ENCODE measurements at regions of chr1 and their contacts with region 1.

Region 1: DNA sequence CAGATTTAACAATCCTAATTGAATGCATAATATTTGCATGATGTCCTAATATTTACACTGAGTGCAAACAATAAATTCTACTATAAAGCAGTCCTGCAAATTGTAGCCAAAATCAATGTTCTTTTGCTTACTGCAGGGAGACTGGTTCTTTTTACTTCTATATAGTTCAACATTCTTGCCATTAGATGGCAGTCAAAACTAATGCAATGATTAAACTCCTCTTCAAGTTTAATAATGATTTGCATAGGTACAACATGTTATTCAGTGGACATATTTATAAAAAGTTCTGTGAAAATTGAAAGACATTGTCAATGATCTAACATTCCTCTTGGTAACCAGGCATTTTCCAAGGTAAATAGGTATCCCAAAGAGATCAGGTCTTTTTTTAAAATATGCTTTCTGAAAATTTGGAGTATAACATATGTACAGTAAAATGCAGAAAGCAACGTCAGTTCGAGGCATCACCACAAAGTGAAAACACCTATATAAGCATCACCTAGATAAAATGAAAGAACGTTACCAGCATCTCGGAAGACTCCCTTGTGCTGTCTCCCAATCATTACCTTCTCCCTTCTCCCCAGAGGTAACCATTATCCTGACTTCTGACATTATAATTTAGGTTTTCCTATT is 9.8 kb upstream of the FNBP1L start:
- DNase-seq: peak; percentile 39
- H3K4me3 ChIP-seq: no peak overlapping the region
- H3K27ac ChIP-seq: no peak overlapping the region
- H3K4me1 ChIP-seq: peaks cover 5% of the 10 kb centered on the region
- H3K27me3 ChIP-seq: no peaks in the 10 kb centered on the region
- CTCF ChIP-seq: peak; percentile 52 to 63

Region 2: GRCh38 chr1:93078986-93079654 is 359.0 kb before region 1 on chr1 and contains the start of gene MTF2:
- CTCF ChIA-PET with region 1: no interaction called
- dilution Hi-C with region 1: no loop called
- in situ Hi-C with region 1: no loop called
- intact Hi-C with region 1: loop called (anchors 5 kb)
- DNase-seq: peak; percentile 94
- H3K4me3 ChIP-seq: peak within 1 kb of the TSS; percentile 67 to 99 (median 83)
- H3K27ac ChIP-seq: peak within 1 kb of the TSS; percentile 79
- H3K4me1 ChIP-seq: peaks cover 22% of the 10 kb centered on the region
- H3K27me3 ChIP-seq: no peaks in the 10 kb centered on the region
- CTCF ChIP-seq: no peak
- total RNA-seq, gene MTF2: 23.5 to 27.5 TPM

Region 3: DNA sequence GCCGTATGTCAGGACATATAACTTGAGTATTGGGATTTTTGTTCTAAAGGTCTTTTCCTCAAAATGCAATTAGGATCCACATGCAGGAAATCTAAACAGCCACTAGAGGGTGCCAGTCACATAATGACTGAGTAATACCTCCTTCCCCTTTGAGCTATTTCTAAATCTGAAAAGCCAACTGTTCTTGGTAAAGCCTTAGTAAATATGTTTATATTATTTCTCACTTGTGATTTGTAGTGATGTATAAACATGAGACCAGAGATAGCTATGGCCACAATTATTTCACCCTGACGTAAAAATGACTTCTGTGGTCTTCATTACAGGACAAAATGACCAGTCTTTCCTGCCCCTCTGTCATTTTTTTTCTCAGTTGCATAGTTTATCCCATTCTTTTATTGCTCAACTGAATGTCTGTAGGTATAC is 133.4 kb before region 1 on chr1:
- CTCF ChIA-PET with region 1: interaction called, 5 read pairs
- dilution Hi-C with region 1: no loop called
- in situ Hi-C with region 1: no loop called
- intact Hi-C with region 1: loop called (anchors 1 kb)
- DNase-seq: peak; percentile 49
- H3K4me3 ChIP-seq: no peak overlapping the region
- H3K27ac ChIP-seq: no peak overlapping the region
- H3K4me1 ChIP-seq: no peaks in the 10 kb centered on the region
- H3K27me3 ChIP-seq: no peaks in the 10 kb centered on the region
- CTCF ChIP-seq: peak; percentile 83 to 93

Region 4: GRCh38 chr1:93395195-93395594 is 42.9 kb before region 1 on chr1:
- CTCF ChIA-PET with region 1: interaction called, 10 read pairs
- dilution Hi-C with region 1: no loop called
- in situ Hi-C with region 1: no loop called
- intact Hi-C with region 1: no loop called
- DNase-seq: peak; percentile 3
- H3K4me3 ChIP-seq: no peak overlapping the region
- H3K27ac ChIP-seq: no peak overlapping the region
- H3K4me1 ChIP-seq: no peaks in the 10 kb centered on the region
- H3K27me3 ChIP-seq: no peaks in the 10 kb centered on the region
- CTCF ChIP-seq: no peak

Region 5: GRCh38 chr1:93629099-93630059 is 191.3 kb after region 1 on chr1:
- CTCF ChIA-PET with region 1: no interaction called
- dilution Hi-C with region 1: no loop called
- in situ Hi-C with region 1: no loop called
- intact Hi-C with region 1: loop called (anchors 2 kb)
- DNase-seq: peak; percentile 59
- H3K4me3 ChIP-seq: no peak overlapping the region
- H3K27ac ChIP-seq: peak overlapping the region; percentile 35
- H3K4me1 ChIP-seq: peaks cover 65% of the 10 kb centered on the region
- H3K27me3 ChIP-seq: no peaks in the 10 kb centered on the region
- CTCF ChIP-seq: peak; percentile 74 to 78

Region 6: DNA sequence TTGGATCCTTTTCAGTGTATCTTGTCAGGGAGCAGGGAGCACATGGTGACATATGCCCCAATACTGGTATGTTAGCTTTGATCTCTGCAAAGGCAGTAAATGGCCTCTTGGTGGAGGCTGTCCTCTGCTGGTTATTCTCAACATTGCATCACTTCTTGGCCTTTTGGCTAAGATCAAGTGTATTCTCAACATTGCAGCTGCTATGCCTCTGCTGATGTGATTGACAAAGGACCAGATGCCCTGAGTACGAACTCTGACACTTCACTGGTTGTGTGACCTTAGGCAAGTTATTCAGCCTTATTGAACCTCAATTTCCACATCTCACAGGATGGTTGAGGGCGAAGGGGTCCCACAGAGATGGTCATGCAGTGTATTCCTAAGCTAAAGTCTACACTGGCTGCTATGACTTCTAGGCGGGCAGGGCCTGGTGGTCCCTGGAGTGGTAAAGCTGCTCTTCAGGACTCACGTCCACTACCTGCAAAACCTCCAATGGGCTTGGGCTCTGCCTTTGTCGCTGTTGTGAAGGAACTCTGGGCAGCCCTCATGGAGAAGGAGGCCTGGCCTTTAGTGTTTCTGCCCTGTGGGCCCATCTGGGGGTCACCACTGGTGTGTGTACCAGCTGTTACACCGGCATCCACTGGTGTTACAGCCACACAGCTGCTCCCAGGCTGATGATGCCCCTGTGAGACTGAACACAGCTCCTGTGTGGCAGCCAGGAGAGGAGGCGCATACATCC is 376.1 kb after region 1 on chr1:
- CTCF ChIA-PET with region 1: no interaction called
- dilution Hi-C with region 1: no loop called
- in situ Hi-C with region 1: no loop called
- intact Hi-C with region 1: loop called (anchors 1 kb)
- DNase-seq: peak; percentile 78
- H3K4me3 ChIP-seq: no peak overlapping the region
- H3K27ac ChIP-seq: peak overlapping the region; percentile 76
- H3K4me1 ChIP-seq: peaks cover 75% of the 10 kb centered on the region
- H3K27me3 ChIP-seq: no peaks in the 10 kb centered on the region
- CTCF ChIP-seq: peak; percentile 100

Region 7: DNA sequence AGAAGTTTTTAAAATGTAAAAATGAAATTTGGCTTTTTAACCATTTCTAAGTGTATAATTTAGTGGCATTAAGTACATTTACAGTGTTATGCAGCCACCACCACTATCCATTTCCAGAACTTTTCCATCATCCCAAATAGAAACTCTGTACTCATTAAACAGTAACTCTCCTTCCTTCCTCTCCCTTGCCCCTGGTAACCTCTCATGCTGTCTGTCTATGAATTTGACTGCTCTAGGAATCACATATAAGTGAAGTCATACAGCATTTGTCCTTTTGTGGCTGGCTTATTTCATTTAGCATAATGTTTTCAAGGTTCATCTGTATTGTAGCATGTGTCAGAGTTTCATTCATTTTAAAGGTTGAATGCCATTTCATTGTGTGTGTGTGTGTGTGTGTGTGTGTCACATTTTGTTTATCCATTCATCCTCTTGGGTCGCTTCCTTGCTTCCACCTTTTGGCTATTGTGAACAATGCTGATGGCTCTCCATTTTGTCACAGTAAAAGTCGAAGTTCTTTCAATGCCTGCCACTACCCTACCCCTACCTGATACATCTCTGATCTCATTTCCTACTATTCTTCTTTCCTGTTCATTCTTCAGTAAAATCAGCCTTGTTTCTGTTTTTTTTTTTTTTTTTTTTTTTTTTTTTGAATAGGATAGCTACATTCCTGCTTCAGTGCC is 1058.1 kb after region 1 on chr1:
- CTCF ChIA-PET with region 1: interaction called, 14 read pairs
- dilution Hi-C with region 1: no loop called
- in situ Hi-C with region 1: no loop called
- intact Hi-C with region 1: no loop called
- DNase-seq: no peak
- H3K4me3 ChIP-seq: no peak overlapping the region
- H3K27ac ChIP-seq: no peak overlapping the region
- H3K4me1 ChIP-seq: no peaks in the 10 kb centered on the region
- H3K27me3 ChIP-seq: no peaks in the 10 kb centered on the region
- CTCF ChIP-seq: no peak

Measured in mammary epithelial cell (primary cell).